ENCODE measurements at regions of chr11 and their contacts with region 1.

Region 1: GRCh38 chr11:123110356-123110755 is 48.4 kb upstream of the HSPA8 start:
- DNase-seq: peak; percentile 32
- H3K4me3 ChIP-seq: peak overlapping the region in 1 of 8 donors; percentile 5
- H3K27ac ChIP-seq: peak overlapping the region in 1 of 8 donors; percentile 13
- H3K4me1 ChIP-seq: peaks cover 0 to 19% (median 8%) of the 10 kb centered on the region in 6 donors
- H3K27me3 ChIP-seq: no peaks in the 10 kb centered on the region
- CTCF ChIP-seq: no peak
- POLR2A ChIP-seq: no peak

Region 2: GRCh38 chr11:122491509-122491908 is 618.8 kb before region 1 on chr11:
- intact Hi-C with region 1: no loop called
- DNase-seq: no peak
- H3K4me3 ChIP-seq: no peak overlapping the region
- H3K27ac ChIP-seq: no peak overlapping the region
- H3K4me1 ChIP-seq: peaks cover 0 to 12% (median 4%) of the 10 kb centered on the region in 6 donors
- H3K27me3 ChIP-seq: no peaks in the 10 kb centered on the region
- CTCF ChIP-seq: no peak
- POLR2A ChIP-seq: no peak

Region 3: DNA sequence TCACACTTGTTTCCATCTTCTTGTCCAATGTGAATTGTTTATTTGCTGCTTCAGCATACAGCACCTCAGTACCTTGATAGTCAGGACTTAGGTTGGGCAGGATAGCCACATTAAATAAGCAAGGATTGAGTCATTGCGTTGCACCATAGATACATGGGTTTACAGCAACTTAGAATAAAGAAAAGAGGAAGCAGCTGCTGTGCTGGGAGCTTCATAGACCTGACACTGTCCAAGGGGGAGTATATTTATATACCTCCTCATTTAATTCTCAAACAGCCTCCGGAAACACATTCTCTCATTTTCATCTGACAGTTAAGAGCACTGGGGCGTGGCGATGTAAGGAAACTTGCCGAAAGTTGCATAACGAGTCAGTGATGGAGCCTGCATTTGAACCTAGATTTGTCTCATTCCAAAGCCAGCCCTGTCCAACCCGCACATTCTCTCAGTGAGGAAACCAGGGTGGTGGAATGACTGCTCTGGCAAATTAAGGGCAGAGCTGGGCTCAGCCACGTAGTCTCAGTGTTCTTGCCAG is 412.7 kb before region 1 on chr11:
- intact Hi-C with region 1: no loop called
- DNase-seq: no peak
- H3K4me3 ChIP-seq: peak overlapping the region in 2 of 8 donors; percentile 2 to 45
- H3K27ac ChIP-seq: peak overlapping the region; percentile 10 to 88 (median 78)
- H3K4me1 ChIP-seq: peaks cover 35 to 94% (median 68%) of the 10 kb centered on the region in 6 donors
- H3K27me3 ChIP-seq: no peaks in the 10 kb centered on the region
- CTCF ChIP-seq: no peak
- POLR2A ChIP-seq: no peak

Region 4: DNA sequence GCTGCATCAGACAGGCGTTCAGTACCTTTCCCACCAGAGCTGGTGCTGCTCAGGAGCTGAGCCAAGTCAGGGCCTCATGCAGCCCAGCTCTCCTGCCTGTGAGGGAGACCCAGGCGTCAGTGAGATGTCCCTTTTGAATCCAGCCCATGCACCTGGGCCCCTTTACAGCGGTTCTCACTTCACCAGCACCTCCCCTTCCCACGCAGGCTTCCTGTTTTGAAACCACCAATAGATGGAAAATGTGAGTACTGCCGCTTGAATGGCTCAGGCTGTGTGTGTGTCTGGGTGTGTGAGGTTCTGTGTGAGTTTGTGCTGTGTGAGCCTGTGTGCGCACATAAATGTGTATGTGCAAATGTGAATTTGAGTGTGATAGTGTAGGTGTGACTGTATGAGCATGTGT is 366.4 kb before region 1 on chr11:
- intact Hi-C with region 1: no loop called
- DNase-seq: peak; percentile 88
- H3K4me3 ChIP-seq: peak overlapping the region in 1 of 8 donors; percentile 46
- H3K27ac ChIP-seq: peak overlapping the region; percentile 31 to 89 (median 80)
- H3K4me1 ChIP-seq: peaks cover 67 to 100% (median 87%) of the 10 kb centered on the region in 6 donors
- H3K27me3 ChIP-seq: no peaks in the 10 kb centered on the region
- CTCF ChIP-seq: no peak
- POLR2A ChIP-seq: peak in 2 of 3 donors; percentile 11 to 22

Region 5: DNA sequence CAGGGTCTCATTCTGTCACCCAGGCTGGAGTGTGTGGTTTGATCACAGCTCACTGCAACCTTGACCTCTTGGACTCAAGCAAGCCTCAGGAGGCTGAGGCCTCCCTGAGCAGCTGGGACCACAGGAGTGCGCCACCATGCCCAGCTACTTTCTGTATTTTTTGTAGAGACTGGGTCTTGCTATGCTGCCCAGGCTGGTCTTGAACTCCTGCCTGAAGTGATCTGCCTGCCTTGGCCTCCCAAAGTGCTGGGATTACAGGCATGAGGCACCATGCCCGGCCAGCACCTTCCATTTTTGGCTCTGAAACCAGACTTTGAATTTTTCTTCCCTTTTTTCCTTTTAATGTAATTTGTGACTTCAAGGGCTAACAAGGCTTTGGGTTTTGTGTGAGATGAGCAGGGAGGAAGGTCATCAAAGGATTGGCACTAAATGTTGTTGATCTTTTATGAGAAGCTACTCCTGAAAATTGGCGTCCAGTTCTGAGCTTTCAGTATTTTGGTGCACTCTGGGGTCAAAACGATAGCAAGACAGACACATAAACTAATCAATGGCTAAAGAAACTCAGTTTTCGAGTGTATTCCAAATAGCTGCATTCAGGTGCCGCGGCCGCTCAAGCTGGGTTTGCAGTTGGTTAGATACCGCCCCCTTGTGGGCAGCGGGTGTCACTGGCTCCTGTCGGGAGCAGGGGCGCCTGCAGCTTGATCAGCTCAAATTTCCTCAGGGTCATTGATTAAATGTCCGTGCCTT is 136.6 kb after region 1 on chr11:
- intact Hi-C with region 1: loop called (anchors 5 kb)
- DNase-seq: peak; percentile 93
- H3K4me3 ChIP-seq: no peak overlapping the region
- H3K27ac ChIP-seq: no peak overlapping the region
- H3K4me1 ChIP-seq: peaks cover 0 to 11% (median 7%) of the 10 kb centered on the region in 6 donors
- H3K27me3 ChIP-seq: peaks cover 0 to 6% (median 0%) of the 10 kb centered on the region in 7 donors
- CTCF ChIP-seq: peak; percentile 70 to 97 (median 94)
- POLR2A ChIP-seq: no peak

Measured in spleen (tissue), 13 donors.